Heart right ventricle (tissue), 16 donors: ENCODE measurements at regions of chr7 and their contacts with region 1.

Region 1: DNA sequence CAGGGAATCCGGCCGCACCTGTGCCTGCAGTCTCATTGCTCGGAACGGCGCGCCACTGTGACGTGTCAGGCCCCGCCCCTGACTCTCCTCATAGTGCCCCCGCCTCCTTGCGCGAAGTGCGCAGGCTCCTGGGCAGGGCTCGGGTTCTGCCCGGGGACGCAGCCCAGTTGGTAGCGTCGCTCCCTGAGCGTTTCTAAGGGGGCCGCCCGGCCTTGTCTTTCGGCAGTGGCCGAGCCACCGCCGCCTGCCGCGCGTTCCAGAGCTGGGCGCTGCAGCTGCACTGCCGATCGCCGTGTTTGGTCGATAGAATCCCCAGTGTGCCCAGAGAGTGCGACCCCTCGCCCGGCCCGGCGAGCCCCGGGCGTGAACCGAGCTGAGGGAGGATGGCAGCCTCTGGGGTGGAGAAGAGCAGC is at the start of gene KLHL7:
- DNase-seq: peak; percentile 96 to 97
- ATAC-seq: peak; percentile 98 to 99 (median 98)
- H3K4me3 ChIP-seq: peak within 1 kb of the TSS; percentile 67 to 98 (median 86)
- H3K27ac ChIP-seq: peak within 1 kb of the TSS; percentile 84 to 95 (median 92)
- H3K4me1 ChIP-seq: peaks cover 0 to 47% (median 32%) of the 10 kb centered on the region in 9 donors
- H3K27me3 ChIP-seq: no peaks in the 10 kb centered on the region
- CTCF ChIP-seq: peak in 1 of 9 donors; percentile 7
- total RNA-seq, gene KLHL7: 86.3 to 159 (median 146) TPM

Region 2: DNA sequence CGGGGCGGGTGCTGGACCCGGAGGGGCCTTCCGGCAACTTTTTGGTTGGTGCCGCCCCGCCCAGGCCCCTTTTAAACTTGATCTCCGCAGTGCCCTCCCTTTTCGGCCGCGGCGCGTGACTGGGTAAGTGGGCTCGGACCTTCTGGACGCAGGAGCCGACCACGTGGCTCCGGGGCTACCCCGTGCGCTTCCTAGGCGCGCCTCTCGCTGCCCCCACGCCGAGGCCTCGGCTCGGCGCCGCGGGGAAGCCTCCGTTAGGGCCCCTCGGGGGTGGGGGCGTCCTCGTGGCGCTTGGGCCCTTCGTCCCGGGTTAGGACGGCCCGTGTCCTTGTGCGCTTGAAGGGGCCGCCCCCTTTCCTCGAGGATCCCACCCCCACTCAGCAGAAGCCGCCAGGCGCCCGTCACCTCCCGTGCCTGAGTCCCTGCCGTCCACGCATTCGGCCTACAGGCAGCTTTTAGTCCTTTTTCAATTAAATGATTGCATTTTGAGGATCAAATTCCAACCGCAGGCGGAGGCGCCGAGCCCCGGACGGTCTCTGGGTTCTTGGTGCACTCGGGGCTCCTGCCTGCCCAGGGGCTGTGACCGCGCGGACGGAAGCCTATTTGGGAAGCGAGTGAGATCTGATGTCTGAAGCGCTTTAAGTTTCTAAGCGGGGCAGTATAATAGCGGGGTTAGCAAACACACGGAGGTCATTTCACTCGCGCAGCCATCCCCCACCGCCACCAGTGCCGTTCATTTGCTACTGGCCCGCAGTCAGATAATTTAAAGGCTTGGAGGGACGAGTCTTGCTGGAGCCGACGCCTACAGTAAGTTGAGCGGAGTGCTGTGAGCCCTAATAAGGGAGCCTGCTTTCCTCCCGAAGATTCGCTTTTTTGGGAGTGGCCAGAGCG is 251.2 kb before region 1 on chr7:
- intact Hi-C with region 1: no loop called
- DNase-seq: peak; percentile 88 to 89
- ATAC-seq: peak; percentile 84 to 97 (median 88)
- H3K4me3 ChIP-seq: peak overlapping the region; percentile 61 to 87 (median 74)
- H3K27ac ChIP-seq: peak overlapping the region; percentile 90 to 99 (median 95)
- H3K4me1 ChIP-seq: peaks cover 0 to 45% (median 36%) of the 10 kb centered on the region in 9 donors
- H3K27me3 ChIP-seq: no peaks in the 10 kb centered on the region
- CTCF ChIP-seq: peak in 8 of 9 donors; percentile 5 to 97 (median 94)

Region 3: GRCh38 chr7:23120106-23120505 is 14.5 kb after region 1 on chr7:
- intact Hi-C with region 1: loop called in 1 of 10 experiments (anchors 2 kb)
- DNase-seq: no peak
- ATAC-seq: no peak
- H3K4me3 ChIP-seq: no peak overlapping the region
- H3K27ac ChIP-seq: peak overlapping the region in 6 of 10 donors; percentile 2 to 75 (median 13)
- H3K4me1 ChIP-seq: peaks cover 2 to 81% (median 55%) of the 10 kb centered on the region in 9 donors
- H3K27me3 ChIP-seq: no peaks in the 10 kb centered on the region
- CTCF ChIP-seq: no peak

Region 4: DNA sequence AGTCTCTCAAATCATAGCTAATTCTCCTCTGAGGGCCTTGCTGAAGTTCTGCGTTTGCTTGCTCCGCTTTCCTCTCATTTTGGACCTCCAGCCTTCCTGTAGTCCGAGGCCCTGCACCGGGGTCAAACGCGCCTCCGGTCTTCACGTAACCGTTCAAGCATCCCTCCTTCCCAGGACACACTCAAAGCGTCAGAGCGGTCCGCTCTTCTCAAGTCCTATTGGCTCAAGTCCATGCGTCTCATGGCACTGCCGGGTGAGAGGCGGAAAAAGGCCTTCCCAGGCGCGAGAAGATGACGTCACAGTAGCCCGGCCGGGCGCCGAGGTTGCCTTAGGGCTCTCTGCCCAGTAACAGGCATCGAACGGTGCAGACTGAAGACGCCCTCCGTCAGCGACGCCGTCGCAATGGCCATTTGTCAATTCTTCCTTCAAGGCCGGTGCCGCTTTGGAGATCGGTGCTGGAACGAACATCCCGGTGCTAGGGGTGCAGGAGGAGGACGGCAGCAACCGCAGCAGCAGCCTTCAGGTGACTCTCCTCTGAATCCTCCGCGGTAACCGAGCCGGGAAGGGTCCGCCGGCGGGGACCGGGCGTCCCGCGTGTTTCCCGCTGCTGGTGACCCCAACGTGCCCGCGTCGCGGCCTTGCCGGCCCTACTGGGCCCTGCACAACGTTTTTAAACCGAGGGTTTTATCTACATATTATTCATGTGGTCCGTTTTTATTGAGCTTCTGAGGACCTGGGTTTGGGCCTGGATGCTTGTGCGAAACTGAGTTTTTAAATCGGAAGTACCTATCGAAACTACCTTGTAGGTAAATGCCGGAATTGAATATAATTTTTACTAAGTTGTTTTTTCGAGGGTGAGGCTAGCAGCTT is 76.3 kb after region 1 on chr7 and contains the start of gene NUP42:
- intact Hi-C with region 1: loop called in 9 of 10 experiments (anchors 1 to 10 kb)
- DNase-seq: peak; percentile 92 to 96
- ATAC-seq: peak; percentile 94 to 99 (median 97)
- H3K4me3 ChIP-seq: peak within 1 kb of the TSS; percentile 56 to 87 (median 76)
- H3K27ac ChIP-seq: peak within 1 kb of the TSS; percentile 59 to 94 (median 91)
- H3K4me1 ChIP-seq: peaks cover 0 to 49% (median 31%) of the 10 kb centered on the region in 9 donors
- H3K27me3 ChIP-seq: no peaks in the 10 kb centered on the region
- CTCF ChIP-seq: no peak
- total RNA-seq, gene NUP42: 14.7 to 25.1 (median 19.7) TPM

Region 5: DNA sequence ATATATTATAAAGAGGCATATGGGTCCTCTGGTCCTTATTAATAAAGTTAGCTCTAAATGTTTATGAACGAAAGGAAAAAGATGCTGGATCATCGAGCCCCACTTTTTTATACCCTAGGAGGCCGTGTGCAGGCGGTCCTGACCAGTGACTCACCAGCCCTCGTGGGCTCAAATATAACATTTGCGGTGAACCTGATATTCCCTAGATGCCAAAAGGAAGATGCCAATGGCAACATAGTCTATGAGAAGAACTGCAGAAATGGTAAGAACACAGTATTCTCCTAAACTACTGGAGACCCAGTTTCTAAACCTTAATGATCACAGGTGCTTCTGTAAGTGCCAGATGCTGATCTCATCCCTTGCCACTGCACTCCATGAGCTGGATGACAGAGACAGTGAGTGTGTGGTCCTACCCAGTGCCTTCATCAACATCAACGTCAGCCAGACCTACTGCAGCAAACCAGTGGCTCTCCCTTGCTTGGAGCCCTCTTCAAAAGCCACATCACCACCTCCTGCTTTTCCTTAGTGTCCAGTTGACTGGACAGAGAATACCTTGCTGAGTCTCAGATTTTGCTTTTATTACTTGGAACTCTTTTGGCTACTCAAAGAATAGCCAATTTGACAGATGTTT is 148.5 kb after region 1 on chr7:
- intact Hi-C with region 1: loop called in 4 of 10 experiments (anchors 5 to 10 kb)
- DNase-seq: no peak
- ATAC-seq: no peak
- H3K4me3 ChIP-seq: no peak overlapping the region
- H3K27ac ChIP-seq: no peak overlapping the region
- H3K4me1 ChIP-seq: peaks cover 0 to 6% (median 1%) of the 10 kb centered on the region in 9 donors
- H3K27me3 ChIP-seq: peaks cover 0 to 13% (median 0%) of the 10 kb centered on the region in 7 donors
- CTCF ChIP-seq: no peak

Region 6: DNA sequence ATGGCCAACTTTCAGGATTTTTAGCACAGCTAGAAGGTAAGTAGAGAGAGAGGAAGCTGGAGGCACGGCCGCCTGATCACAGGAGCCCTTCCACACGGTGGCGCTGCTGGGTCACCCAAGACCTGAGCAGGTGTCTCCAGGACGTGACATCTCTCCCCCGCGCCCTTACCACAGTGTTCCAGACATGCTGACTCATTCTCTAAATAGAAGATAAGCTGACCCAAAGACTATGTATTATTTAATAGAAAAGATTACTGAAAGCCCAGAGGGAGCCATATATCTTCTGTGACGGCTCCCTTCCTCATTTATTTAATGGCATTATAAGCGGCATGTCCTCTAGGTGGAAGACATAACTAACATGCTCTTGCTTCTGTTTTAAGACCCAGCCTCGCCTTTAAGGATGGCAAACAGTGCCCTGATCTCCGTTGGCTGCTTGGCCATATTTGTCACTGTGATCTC is 167.5 kb after region 1 on chr7:
- intact Hi-C with region 1: loop called in 2 of 10 experiments (anchors 10 kb)
- DNase-seq: peak; percentile 66 to 79
- ATAC-seq: peak; percentile 63 to 92 (median 86)
- H3K4me3 ChIP-seq: no peak overlapping the region
- H3K27ac ChIP-seq: no peak overlapping the region
- H3K4me1 ChIP-seq: peaks cover 0 to 14% (median 0%) of the 10 kb centered on the region in 9 donors
- H3K27me3 ChIP-seq: no peaks in the 10 kb centered on the region
- CTCF ChIP-seq: peak; percentile 30 to 85 (median 70)